ENCODE measurements at regions of chr1 and their contacts with region 1.

Region 1: DNA sequence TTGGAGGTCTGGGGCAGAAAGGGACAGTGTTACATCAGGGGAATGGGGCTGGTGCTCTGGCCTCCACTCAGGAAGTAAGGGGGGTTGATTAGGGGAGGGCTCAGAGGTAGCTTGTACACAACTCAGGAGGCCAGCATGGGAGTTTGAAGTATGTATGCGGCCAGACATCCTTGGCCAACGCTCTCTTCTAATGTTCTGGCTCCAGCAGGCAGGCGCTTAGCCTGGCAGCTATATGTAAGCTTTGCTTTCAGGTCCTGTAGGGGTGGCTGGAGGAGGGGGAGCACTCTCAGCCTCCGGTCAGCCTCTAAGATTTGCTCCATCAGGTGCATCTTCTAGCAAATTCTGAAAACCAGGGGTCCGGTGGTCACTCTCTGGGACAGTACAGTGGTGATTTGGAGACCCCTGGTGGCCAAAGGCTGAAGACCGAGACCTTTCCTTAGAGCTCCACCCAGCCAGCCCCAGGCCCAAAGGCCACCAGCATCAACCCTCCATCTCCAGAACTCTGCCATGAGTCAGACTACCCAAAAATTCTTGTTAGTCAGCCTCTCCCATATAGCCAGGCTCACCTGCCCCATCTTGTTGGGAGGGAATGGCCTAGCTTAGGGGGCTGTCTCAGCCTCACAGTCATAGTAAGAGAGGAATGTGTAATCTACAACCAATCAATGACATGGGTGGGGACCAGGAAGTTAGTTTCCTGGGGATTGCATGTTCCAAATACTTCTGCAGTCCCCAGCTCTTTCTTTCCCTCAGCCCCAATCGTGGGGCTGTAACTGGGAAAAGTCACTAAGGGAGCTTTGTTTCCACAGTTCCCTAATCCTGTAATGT is 9.7 kb upstream of the COL8A2 start:
- DNase-seq: peak in 7 of 9 experiments; percentile 34 to 75 (median 52)
- ATAC-seq: peak; percentile 61
- H3K4me3 ChIP-seq: no peak overlapping the region
- H3K4me3 Mint-ChIP-seq: no peak overlapping the region
- H3K27ac ChIP-seq: no peak overlapping the region
- H3K27ac Mint-ChIP-seq: peak overlapping the region; percentile 56
- H3K4me1 ChIP-seq: no peaks in the 10 kb centered on the region
- H3K4me1 Mint-ChIP-seq: no peaks in the 10 kb centered on the region
- H3K27me3 ChIP-seq: no peaks in the 10 kb centered on the region
- H3K27me3 Mint-ChIP-seq: no peaks in the 10 kb centered on the region
- CTCF ChIP-seq: peak; percentile 56

Region 2: DNA sequence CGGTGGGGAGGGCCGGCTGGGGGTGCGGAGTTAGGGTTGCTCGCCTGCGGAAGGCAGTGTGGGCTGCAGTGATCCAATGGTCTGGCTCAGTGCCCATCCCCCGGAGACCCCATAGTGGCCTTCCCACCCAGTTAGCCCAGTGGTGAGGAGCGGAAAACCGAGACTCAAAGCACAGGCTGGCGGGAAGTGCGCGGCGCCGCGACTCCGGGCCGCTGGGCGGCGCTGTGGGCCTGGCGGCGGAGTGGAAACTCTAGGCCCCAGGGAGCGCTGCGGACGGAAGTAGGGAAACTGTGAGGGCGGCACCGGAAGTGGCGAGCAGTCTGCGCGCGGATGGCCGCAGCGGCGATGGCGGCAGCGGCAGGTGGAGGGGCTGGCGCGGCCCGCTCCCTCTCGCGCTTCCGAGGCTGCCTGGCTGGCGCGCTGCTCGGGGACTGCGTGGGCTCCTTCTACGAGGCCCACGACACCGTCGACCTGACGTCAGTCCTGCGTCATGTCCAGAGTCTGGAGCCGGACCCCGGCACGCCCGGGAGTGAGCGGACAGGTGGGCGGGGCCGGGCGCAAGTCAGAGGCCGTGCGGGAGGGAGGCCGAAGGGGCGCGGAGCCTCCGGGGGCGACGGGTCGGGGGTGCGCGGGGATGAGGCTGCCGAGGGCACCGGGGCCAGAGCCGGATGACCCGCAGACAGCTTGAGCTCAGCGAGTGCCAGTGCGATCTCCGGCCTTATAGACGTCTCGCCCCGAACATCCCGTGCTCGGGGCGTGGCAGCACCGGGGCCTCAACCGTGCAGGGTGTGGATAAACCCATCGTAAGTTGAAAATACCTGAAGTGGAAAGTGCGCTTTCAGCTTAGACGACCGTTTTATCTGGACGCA is 45.9 kb before region 1 on chr1 and contains the start of gene ADPRS:
- CTCF ChIA-PET with region 1: interaction called, 372 read pairs
- POLR2A ChIA-PET with region 1: interaction called, 4 read pairs
- intact Hi-C with region 1: no loop called
- DNase-seq: peak; percentile 81 to 96 (median 91)
- ATAC-seq: peak; percentile 89
- H3K4me3 ChIP-seq: peak within 1 kb of the TSS; percentile 89 to 98
- H3K4me3 Mint-ChIP-seq: peak within 1 kb of the TSS; percentile 90
- H3K27ac ChIP-seq: peak within 1 kb of the TSS; percentile 84 to 95
- H3K27ac Mint-ChIP-seq: peak within 1 kb of the TSS; percentile 94
- H3K4me1 ChIP-seq: peaks cover 24% of the 10 kb centered on the region
- H3K4me1 Mint-ChIP-seq: peaks cover 25% of the 10 kb centered on the region
- H3K27me3 ChIP-seq: peaks cover 5 to 6% of the 10 kb centered on the region in 2 experiments
- H3K27me3 Mint-ChIP-seq: peaks cover 15% of the 10 kb centered on the region
- CTCF ChIP-seq: peak; percentile 98
- total RNA-seq, gene ADPRS: 26.2 to 26.7 TPM

Region 3: DNA sequence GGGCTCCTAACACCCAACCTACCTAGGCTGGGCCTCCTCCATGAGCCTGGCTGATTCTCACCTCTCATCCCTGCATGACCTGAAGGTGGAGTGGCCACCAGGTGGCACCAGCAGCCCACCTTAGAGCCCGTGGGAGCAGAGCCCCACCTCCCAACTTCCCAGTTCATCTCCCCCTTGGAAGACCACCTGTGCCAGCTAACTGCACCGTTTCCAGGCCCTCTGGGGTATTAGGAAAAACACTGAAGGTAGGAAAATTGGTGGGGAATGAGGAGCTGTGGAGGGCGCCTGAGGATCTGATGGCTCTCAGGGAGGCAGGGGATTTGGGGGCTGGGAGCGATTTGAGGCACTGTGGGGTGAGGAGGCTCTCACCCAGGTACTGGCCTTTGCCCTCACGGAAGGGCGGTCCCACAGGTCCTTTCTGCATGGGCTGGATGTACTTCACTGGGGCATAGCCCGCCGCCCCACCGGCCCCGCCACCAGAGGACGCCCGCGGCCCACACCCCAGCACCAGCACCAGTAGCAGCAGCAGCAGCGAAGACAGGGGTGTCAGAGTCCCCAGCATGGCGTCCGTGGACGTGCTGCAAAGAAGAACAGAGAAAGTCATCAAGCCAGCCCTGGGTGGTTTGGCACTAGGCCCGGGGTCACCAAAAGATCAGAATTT is 34.9 kb before region 1 on chr1:
- CTCF ChIA-PET with region 1: interaction called, 372 read pairs
- POLR2A ChIA-PET with region 1: interaction called, 4 read pairs
- intact Hi-C with region 1: loop called (anchors 1 kb)
- DNase-seq: peak; percentile 55 to 89 (median 80)
- ATAC-seq: peak; percentile 88
- H3K4me3 ChIP-seq: peak overlapping the region in 1 of 2 experiments; percentile 7
- H3K4me3 Mint-ChIP-seq: no peak overlapping the region
- H3K27ac ChIP-seq: no peak overlapping the region
- H3K27ac Mint-ChIP-seq: no peak overlapping the region
- H3K4me1 ChIP-seq: peaks cover 8% of the 10 kb centered on the region
- H3K4me1 Mint-ChIP-seq: peaks cover 4% of the 10 kb centered on the region
- H3K27me3 ChIP-seq: no peaks in the 10 kb centered on the region
- H3K27me3 Mint-ChIP-seq: no peaks in the 10 kb centered on the region
- CTCF ChIP-seq: peak; percentile 83

Region 4: GRCh38 chr1:36109041-36109679 is 25.6 kb before region 1 on chr1:
- CTCF ChIA-PET with region 1: interaction called, 372 read pairs
- POLR2A ChIA-PET with region 1: interaction called, 8 read pairs
- intact Hi-C with region 1: no loop called
- DNase-seq: peak; percentile 31 to 84 (median 69)
- ATAC-seq: peak; percentile 97
- H3K4me3 ChIP-seq: peak overlapping the region in 1 of 2 experiments; percentile 13
- H3K4me3 Mint-ChIP-seq: peak overlapping the region; percentile 55
- H3K27ac ChIP-seq: peak overlapping the region in 1 of 2 experiments; percentile 46
- H3K27ac Mint-ChIP-seq: peak overlapping the region; percentile 80
- H3K4me1 ChIP-seq: peaks cover 39% of the 10 kb centered on the region
- H3K4me1 Mint-ChIP-seq: peaks cover 35% of the 10 kb centered on the region
- H3K27me3 ChIP-seq: no peaks in the 10 kb centered on the region
- H3K27me3 Mint-ChIP-seq: no peaks in the 10 kb centered on the region
- CTCF ChIP-seq: no peak

Region 5: DNA sequence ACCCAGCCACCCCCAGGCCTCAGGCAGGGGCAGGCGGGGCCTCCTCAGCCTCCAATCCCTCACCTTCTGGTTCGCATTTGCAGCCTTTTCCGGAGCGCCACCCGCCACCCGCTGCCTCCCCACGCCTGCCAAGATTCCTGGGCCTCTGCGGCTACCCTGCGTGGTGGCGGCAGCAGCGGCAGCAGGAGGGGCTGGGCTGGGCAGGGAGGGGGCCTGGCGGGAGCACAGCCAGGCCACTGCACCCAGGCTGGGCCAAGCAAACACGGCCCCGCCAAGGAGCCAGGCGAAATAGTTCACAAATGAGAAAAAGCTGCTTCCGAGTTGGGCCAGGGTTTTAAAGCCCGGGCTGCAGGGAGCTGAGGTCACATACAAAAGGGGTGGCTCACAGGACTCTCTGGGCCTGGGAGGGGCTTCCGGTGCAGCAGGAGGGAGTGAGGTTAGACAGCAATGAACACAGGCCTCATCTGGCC is 19.5 kb before region 1 on chr1:
- CTCF ChIA-PET with region 1: interaction called, 52 read pairs
- POLR2A ChIA-PET with region 1: interaction called, 3 read pairs
- intact Hi-C with region 1: no loop called
- DNase-seq: no peak
- ATAC-seq: no peak
- H3K4me3 ChIP-seq: no peak overlapping the region
- H3K4me3 Mint-ChIP-seq: no peak overlapping the region
- H3K27ac ChIP-seq: no peak overlapping the region
- H3K27ac Mint-ChIP-seq: no peak overlapping the region
- H3K4me1 ChIP-seq: peaks cover 14% of the 10 kb centered on the region
- H3K4me1 Mint-ChIP-seq: peaks cover 12% of the 10 kb centered on the region
- H3K27me3 ChIP-seq: no peaks in the 10 kb centered on the region
- H3K27me3 Mint-ChIP-seq: no peaks in the 10 kb centered on the region
- CTCF ChIP-seq: no peak

Region 6: GRCh38 chr1:36285448-36286101 is 150.9 kb after region 1 on chr1:
- CTCF ChIA-PET with region 1: interaction called, 13 read pairs
- POLR2A ChIA-PET with region 1: no interaction called
- intact Hi-C with region 1: no loop called
- DNase-seq: peak; percentile 32 to 91 (median 65)
- ATAC-seq: peak; percentile 98
- H3K4me3 ChIP-seq: no peak overlapping the region
- H3K4me3 Mint-ChIP-seq: no peak overlapping the region
- H3K27ac ChIP-seq: no peak overlapping the region
- H3K27ac Mint-ChIP-seq: peak overlapping the region; percentile 9
- H3K4me1 ChIP-seq: peaks cover 4% of the 10 kb centered on the region
- H3K4me1 Mint-ChIP-seq: peaks cover 11% of the 10 kb centered on the region
- H3K27me3 ChIP-seq: no peaks in the 10 kb centered on the region
- H3K27me3 Mint-ChIP-seq: no peaks in the 10 kb centered on the region
- CTCF ChIP-seq: peak; percentile 68

Region 7: DNA sequence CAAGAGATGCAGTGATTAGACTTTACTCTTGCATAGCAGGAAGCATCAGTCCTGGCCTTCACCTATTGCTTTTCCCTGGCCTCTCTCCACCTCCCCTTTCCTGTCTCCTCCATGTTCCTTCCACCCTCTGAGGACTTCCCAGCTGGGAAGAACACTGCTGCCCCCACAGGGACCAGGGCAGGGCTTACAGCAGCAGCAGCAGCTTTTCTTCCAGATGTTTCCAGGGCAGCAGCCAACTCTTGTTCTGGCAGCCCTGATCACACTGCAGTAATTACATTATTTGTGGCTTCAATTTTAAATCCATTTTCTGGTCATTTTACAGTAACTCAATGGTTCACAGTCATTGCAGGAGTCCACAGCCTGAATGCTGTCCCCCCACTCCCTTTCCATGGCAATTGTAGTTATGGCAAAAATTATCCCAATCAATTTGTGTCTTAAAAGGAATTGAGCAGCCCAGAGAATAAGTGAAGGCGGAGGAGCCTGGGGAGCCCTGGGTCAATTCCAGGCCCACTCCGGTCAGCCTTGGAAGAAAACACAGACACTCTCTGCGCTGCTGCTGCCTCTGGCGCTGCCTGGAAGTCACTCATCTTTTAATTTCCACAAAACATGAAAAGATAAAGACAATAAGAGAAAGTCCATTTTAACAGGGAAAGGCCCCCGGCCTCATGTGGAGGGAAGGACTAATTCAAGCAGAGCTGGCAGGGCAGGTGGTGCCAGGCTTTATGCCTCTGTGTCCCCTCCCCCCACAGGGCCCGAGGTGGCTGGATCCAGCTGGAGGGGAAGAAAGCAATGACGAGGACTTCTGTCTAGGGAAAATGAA is 751.0 kb after region 1 on chr1:
- CTCF ChIA-PET with region 1: no interaction called
- POLR2A ChIA-PET with region 1: no interaction called
- intact Hi-C with region 1: no loop called
- DNase-seq: no peak
- ATAC-seq: no peak
- H3K4me3 ChIP-seq: no peak overlapping the region
- H3K4me3 Mint-ChIP-seq: no peak overlapping the region
- H3K27ac ChIP-seq: no peak overlapping the region
- H3K27ac Mint-ChIP-seq: no peak overlapping the region
- H3K4me1 ChIP-seq: no peaks in the 10 kb centered on the region
- H3K4me1 Mint-ChIP-seq: no peaks in the 10 kb centered on the region
- H3K27me3 ChIP-seq: no peaks in the 10 kb centered on the region
- H3K27me3 Mint-ChIP-seq: peaks cover 15% of the 10 kb centered on the region
- CTCF ChIP-seq: no peak

Measured in CD8-positive, alpha-beta T cell (primary cell).